ENCODE measurements at regions of chr1 and their contacts with region 1.

Region 1: DNA sequence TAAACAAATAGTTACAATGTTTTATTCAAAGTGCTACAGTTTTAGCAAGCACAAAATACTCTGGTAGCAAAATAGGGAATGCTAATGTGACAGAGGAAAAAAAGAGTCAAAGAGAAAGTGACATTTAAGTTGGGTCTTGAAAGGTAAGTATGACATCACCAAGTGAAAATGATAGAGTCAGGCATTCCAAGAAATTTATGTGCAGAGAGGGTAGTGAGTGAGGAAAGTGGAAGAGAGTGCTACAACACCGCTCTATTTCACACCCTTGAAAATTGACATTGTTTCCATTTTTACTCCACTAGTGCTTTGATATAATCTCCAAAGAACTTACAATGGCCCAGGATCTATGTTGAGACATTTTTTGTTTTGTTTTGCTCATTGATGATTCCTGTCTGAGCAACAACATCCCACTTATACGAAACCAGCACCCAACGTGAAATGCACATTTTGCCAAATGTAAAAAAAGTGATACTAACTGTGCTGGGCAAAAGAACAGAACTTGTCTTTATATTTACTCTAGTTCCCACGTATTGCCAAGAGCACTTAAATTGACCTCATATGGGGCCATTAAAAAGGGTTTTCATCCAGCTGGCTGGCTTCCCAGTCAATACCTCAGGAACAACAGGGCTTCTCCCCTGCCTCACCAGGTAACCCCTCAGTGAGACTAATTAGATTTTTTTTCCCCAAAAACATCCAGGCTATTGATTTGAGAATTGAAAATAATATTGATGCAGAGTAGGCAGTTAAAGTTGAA is 206.3 kb upstream of the NR5A2 start:
- DNase-seq: no peak
- ATAC-seq: no peak
- H3K4me3 ChIP-seq: no peak overlapping the region
- H3K27ac ChIP-seq: no peak overlapping the region
- H3K4me1 ChIP-seq: no peaks in the 10 kb centered on the region
- H3K27me3 ChIP-seq: peaks cover 0 to 5% (median 0%) of the 10 kb centered on the region in 7 donors
- CTCF ChIP-seq: no peak

Region 2: DNA sequence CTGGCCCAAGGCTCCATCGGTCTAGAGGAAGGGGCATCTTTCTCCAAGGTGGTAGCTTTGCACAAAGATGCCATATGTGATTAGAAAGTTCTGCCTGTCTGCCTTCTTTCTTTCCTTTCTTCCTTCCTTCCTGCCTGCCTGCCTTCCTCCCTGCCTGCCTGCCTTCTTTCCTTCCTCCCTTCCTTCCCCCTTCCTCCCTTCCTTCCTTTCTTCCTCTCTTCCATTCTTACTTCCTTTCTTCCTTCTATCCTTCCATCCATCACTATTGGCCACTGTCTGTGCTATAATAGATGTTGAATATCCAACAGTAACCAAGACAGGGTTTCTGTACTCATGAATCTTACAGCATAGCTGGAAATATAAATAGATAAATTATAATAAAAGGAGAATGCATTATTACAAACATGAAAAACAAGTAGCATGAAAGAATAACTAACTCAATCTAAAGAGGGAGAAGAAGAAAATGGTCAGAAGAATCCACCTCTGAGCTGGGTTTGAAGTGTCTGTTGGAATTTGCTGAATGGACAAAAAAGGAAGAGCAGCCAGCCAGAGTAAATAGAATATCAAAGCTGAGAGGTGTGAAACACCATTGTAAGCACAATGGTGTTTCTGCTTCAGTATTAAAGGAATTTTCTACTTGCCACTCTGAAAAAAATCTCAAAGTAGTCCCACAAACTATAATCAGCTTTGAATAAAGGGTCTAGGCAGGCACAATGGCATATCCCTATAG is 44.3 kb before region 1 on chr1:
- intact Hi-C with region 1: loop called in 1 of 10 experiments (anchors 2 kb)
- DNase-seq: no peak
- ATAC-seq: no peak
- H3K4me3 ChIP-seq: no peak overlapping the region
- H3K27ac ChIP-seq: no peak overlapping the region
- H3K4me1 ChIP-seq: no peaks in the 10 kb centered on the region
- H3K27me3 ChIP-seq: no peaks in the 10 kb centered on the region
- CTCF ChIP-seq: no peak

Region 3: DNA sequence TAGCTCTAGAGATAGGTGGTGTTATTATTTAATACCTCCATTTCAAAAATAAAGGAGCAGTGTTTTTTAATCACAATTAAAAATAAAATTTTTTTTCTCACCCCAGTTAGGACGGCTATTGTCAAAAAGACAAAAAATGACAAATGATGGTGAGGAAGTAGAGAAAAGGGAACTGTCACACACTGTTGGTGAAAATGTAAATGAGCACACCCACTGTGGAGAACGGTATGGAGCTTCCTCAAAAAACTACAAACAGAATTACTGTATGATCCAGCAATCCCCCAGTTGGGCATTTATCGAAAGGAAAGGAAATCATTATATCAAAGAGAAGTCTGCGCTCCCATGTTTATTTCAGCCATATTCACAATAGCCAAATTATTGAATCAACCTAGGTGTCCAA is 57.6 kb after region 1 on chr1:
- intact Hi-C with region 1: no loop called
- DNase-seq: no peak
- ATAC-seq: no peak
- H3K4me3 ChIP-seq: no peak overlapping the region
- H3K27ac ChIP-seq: no peak overlapping the region
- H3K4me1 ChIP-seq: peaks cover 0 to 15% (median 0%) of the 10 kb centered on the region in 9 donors
- H3K27me3 ChIP-seq: no peaks in the 10 kb centered on the region
- CTCF ChIP-seq: no peak

Region 4: DNA sequence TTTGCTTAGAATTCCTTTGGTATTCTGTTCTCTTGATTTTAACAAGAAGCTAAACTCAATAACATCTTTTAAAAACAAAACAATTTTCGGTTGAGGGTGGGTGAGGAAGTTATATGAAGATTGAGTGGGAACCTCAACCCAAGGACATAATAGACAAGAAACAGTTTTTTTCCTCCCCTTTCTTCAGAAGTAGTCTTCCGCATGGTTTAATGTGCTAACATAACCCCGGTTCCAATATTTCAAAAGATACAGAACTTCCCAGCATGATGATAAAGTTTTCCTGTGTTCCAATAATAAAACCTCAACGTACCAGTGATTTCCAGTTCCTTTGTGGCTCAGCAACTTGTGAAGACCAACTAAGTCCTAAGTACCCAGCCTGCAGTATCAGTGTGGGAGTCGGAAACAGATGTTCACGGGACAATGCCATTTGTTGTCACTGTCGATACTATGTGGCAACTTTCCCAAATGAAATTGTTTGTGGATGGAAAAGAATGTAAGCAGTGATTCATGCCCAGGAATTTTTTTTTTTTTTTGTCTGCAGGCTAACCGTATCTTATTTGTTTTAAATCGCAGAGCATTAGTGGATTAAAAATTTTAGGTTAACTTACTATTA is 254.8 kb after region 1 on chr1:
- intact Hi-C with region 1: no loop called
- DNase-seq: peak in 1 of 2 donors; percentile 73
- ATAC-seq: peak; percentile 54 to 95 (median 90)
- H3K4me3 ChIP-seq: peak overlapping the region in 4 of 10 donors; percentile 7 to 19 (median 9)
- H3K27ac ChIP-seq: peak overlapping the region; percentile 4 to 70 (median 46)
- H3K4me1 ChIP-seq: peaks cover 0 to 42% (median 28%) of the 10 kb centered on the region in 9 donors
- H3K27me3 ChIP-seq: peaks cover 0 to 8% (median 0%) of the 10 kb centered on the region in 7 donors
- CTCF ChIP-seq: no peak